Activated T-helper 2 cell treated with anti-CD3 and anti-CD28 coated beads, Interferon-gamma antibody, Interleukin-2, Interleukin-4, amounts not matched to agents 10 μg/mL and 5 μg/mL and 100 μg/mL, durations not matched to agents 14 hours and 24 hours and 36 hours (primary cell): ENCODE measurements at regions of chr9 and their contacts with region 1.

Region 1: DNA sequence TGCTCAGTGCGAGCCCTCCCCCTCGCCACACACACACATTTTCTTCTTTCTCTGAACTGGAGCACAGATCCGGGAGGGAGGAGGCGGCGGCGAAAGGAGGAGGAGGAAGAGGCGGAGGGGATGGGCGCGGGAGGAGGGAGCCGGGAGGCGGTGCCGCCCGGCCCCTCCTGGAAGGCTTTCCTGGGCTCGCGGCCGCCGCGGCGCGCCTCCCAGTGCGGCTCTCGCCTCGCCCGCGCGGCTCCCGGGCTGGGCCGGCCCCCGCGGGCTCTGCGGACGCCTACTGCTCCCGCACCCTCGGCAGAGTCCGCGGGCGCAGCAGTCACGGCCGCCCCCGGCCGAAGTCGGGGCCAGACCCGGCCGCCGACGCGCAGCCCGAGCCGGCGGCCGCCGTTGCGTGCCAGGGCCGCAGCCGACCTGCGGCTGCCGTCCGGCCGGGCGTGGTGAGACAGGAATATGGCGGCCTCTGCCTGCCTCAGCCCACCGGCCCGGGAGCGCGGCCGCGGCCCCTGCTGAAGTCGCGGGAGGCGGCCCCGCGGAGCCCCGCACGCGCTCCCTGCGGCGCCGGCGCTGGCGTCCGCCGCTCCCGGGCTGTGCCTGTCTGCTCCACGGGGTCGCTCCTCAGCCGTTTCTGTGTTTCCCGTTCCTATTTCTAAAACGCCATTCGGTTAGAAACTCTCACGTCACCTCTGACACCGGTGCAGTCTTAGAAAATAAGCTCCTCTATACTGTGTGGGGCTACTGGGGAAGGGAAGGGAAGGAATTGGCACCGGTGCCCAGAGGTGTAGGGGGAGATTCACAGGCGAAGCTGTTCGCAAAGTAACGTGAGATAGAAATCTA is 500 bp upstream of the GNAQ start:
- DNase-seq: peak; percentile 75
- H3K4me3 Mint-ChIP-seq: peak overlapping the region; percentile 92
- H3K27ac Mint-ChIP-seq: peak overlapping the region; percentile 94
- H3K4me1 Mint-ChIP-seq: peaks cover 54% of the 10 kb centered on the region
- H3K27me3 Mint-ChIP-seq: peaks cover 5% of the 10 kb centered on the region

Region 2: GRCh38 chr9:77841739-77842386 is 190.2 kb before region 1 on chr9:
- intact Hi-C with region 1: loop called (anchors 5 kb)
- DNase-seq: no peak
- H3K4me3 Mint-ChIP-seq: no peak overlapping the region
- H3K27ac Mint-ChIP-seq: peak overlapping the region; percentile 42
- H3K4me1 Mint-ChIP-seq: peaks cover 37% of the 10 kb centered on the region
- H3K27me3 Mint-ChIP-seq: no peaks in the 10 kb centered on the region

Region 3: GRCh38 chr9:77977210-77977611 is 54.9 kb before region 1 on chr9:
- intact Hi-C with region 1: loop called (anchors 1 kb)
- DNase-seq: peak; percentile 34
- H3K4me3 Mint-ChIP-seq: peak overlapping the region; percentile 6
- H3K27ac Mint-ChIP-seq: peak overlapping the region; percentile 83
- H3K4me1 Mint-ChIP-seq: peaks cover 56% of the 10 kb centered on the region
- H3K27me3 Mint-ChIP-seq: no peaks in the 10 kb centered on the region

Region 4: GRCh38 chr9:78121488-78121887 is 89.4 kb after region 1 on chr9:
- intact Hi-C with region 1: loop called (anchors 2 kb)
- DNase-seq: peak; percentile 37
- H3K4me3 Mint-ChIP-seq: no peak overlapping the region
- H3K27ac Mint-ChIP-seq: no peak overlapping the region
- H3K4me1 Mint-ChIP-seq: peaks cover 31% of the 10 kb centered on the region
- H3K27me3 Mint-ChIP-seq: peaks cover 13% of the 10 kb centered on the region

Region 5: GRCh38 chr9:78196258-78196657 is 164.1 kb after region 1 on chr9:
- intact Hi-C with region 1: no loop called
- DNase-seq: no peak
- H3K4me3 Mint-ChIP-seq: no peak overlapping the region
- H3K27ac Mint-ChIP-seq: no peak overlapping the region
- H3K4me1 Mint-ChIP-seq: peaks cover 12% of the 10 kb centered on the region
- H3K27me3 Mint-ChIP-seq: peaks cover 6% of the 10 kb centered on the region